PC-3 (cell line): ENCODE measurements at regions of chr2 and their contacts with region 1.

Region 1: DNA sequence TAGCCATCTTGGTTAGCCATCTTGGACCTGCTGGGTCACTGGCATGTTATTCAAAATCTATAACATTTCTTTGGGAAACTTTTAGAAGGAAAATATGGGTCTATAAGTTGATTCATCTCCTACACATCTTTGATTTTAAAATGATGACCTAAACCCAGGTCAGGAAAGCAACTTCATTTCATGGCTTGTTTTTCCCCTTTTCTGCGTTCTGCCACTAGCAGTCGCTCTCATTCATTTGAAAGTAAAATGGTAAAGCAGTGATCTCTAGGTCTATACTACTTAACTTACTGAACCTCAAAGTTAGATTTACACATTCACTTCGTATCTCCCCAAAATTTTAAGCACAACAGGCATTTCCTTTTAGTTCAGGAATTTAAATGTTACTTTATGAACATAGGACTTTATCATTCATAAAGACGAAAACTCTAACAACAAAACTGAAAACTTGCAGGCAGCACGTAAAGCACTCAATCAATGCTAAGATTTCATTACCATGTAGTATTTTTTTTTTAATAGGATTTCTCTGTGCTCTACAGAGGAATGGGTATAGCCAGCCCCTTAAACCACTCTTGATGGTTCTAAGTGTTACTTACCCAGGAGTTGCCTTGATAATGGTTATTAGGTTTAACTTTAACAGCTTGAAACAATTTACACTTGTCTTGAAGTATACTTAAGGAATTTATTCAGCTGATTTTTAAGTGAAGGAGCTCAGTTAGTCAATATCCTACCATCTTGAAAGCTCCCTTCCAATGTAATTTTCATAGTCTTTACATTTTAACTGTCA is 62.5 kb downstream of the GORASP2 start:
- DNase-seq: no peak
- ATAC-seq: no peak
- H3K4me3 ChIP-seq: no peak overlapping the region
- H3K27ac ChIP-seq: no peak overlapping the region
- H3K4me1 ChIP-seq: no peaks in the 10 kb centered on the region
- H3K27me3 ChIP-seq: no peaks in the 10 kb centered on the region
- CTCF ChIP-seq: peak; percentile 22; the same call in 1 of the 2 replicates

Region 2: DNA sequence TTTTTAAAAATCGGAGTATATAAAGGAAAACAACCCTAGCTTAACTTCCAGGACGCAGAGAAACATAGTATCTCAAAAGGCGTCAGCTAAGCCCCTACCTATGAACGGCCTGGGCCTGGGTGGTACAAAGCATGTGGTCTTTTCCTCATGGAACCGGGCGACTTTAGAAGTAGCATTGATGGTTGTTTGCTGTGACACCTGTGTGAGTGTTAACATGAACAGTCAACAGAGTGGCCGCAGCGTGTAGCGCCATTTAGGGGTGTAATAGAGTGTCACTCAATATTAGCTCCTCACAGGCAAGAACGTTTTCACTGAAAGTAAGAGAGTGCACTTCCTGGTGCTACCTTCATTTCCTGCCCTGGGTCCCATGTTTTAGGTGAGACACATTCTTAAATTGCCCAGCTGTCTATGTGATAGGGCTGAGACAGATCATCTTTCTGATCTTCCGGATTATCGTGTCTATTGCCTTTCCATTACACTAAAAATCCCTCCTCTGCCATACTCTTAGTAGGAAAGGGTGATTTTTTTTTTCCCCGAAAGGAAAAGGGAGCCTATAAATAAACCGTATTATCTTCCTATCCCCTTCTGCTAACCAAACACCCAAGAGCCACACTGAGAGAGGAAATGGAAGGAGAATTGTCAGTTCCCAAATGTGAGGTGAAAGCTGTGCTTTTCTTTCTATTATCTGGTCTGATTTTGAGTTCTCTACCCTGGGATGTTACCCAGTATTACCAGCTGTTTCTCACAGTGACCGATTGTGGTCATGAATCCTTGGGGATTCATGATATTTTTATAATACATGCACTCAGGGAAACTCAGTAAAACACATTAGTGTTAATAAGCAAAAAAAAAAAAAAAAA is 61.2 kb before region 1 on chr2:
- CTCF ChIA-PET with region 1: no interaction called
- POLR2A ChIA-PET with region 1: no interaction called
- intact Hi-C with region 1: no loop called
- DNase-seq: peak; percentile 64
- ATAC-seq: peak; percentile 5; the same call in 1 of the 2 replicates
- H3K4me3 ChIP-seq: peak overlapping the region; percentile 93
- H3K27ac ChIP-seq: peak overlapping the region; percentile 57; the same call in 1 of the 2 replicates
- H3K4me1 ChIP-seq: peaks cover 26% of the 10 kb centered on the region
- H3K27me3 ChIP-seq: no peaks in the 10 kb centered on the region
- CTCF ChIP-seq: no peak

Region 3: GRCh38 chr2:171547720-171548119 is 556.1 kb after region 1 on chr2:
- CTCF ChIA-PET with region 1: interaction called, 11 read pairs
- POLR2A ChIA-PET with region 1: no interaction called
- intact Hi-C with region 1: no loop called
- DNase-seq: no peak
- ATAC-seq: no peak
- H3K4me3 ChIP-seq: no peak overlapping the region
- H3K27ac ChIP-seq: no peak overlapping the region
- H3K4me1 ChIP-seq: no peaks in the 10 kb centered on the region
- H3K27me3 ChIP-seq: no peaks in the 10 kb centered on the region
- CTCF ChIP-seq: no peak